ENCODE measurements at regions of chr13 and their contacts with region 1.

Region 1: GRCh38 chr13:40517486-40518480 is 148.7 kb downstream of the FOXO1 start:
- DNase-seq: no peak
- H3K4me3 Mint-ChIP-seq: peak overlapping the region; percentile 62
- H3K27ac Mint-ChIP-seq: peak overlapping the region; percentile 69
- H3K4me1 Mint-ChIP-seq: peaks cover 83% of the 10 kb centered on the region
- H3K27me3 Mint-ChIP-seq: no peaks in the 10 kb centered on the region

Region 2: GRCh38 chr13:39170711-39171110 is 1347.1 kb before region 1 on chr13:
- intact Hi-C with region 1: no loop called
- DNase-seq: no peak
- H3K4me3 Mint-ChIP-seq: no peak overlapping the region
- H3K27ac Mint-ChIP-seq: no peak overlapping the region
- H3K4me1 Mint-ChIP-seq: no peaks in the 10 kb centered on the region
- H3K27me3 Mint-ChIP-seq: no peaks in the 10 kb centered on the region

Region 3: DNA sequence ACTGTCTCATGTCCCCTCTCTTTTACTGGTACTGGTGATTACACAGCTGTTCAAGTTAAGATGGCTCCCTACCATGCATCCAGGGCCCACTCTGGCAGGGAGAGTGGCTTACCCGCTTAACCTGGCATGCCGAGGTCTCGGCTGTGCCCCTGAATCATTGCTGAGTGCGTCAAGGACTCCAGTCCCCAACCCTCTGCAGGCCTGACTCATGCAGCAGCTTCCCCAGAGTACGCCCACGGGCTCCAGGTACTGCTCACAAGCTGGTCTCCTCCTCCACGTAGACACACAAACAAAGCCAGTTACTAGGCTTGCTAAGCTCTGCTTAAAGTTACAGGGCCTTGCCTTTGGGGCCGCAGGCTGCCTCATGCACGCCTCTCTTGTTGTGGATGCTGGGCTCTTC is 414.9 kb before region 1 on chr13:
- intact Hi-C with region 1: loop called (anchors 1 kb)
- DNase-seq: peak; percentile 51
- H3K4me3 Mint-ChIP-seq: peak overlapping the region; percentile 74
- H3K27ac Mint-ChIP-seq: peak overlapping the region; percentile 97
- H3K4me1 Mint-ChIP-seq: peaks cover 64% of the 10 kb centered on the region
- H3K27me3 Mint-ChIP-seq: no peaks in the 10 kb centered on the region

Region 4: DNA sequence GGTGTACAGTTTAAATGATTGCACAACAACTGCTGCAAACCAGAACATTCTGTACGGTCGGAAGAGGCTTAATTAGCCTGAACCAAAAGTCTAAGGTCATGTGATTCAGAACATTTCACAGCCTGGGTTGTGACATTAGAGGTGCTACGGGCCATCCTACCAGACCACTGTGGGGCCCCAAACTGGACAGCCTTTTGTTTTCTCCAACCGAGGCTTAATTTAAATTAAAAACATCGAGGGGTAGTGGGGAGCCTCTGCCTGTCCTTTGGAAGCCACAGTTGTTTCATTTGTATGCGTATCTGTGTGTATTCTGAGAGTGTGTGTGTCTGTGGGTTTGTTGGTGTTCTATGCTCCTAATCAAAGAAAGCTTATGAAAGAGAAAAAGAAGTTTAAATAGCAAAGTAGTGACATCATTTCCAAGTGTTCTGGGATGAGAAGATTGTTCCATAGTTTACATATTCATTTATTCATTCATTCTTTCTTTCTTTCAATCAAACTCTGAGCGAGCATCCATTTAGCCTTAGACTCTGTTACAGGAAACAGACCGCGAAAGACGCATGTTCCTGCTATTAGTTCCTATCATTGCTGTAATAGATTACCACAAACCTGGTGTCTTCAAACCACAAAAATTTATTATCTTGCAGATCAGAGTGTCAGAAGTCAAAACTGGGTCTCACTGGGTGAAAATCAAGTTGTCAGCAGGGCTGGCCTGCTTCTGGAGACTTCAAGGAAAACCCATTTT is 296.2 kb before region 1 on chr13:
- intact Hi-C with region 1: loop called (anchors 1 kb)
- DNase-seq: no peak
- H3K4me3 Mint-ChIP-seq: peak overlapping the region; percentile 37
- H3K27ac Mint-ChIP-seq: peak overlapping the region; percentile 69
- H3K4me1 Mint-ChIP-seq: peaks cover 43% of the 10 kb centered on the region
- H3K27me3 Mint-ChIP-seq: no peaks in the 10 kb centered on the region

Region 5: DNA sequence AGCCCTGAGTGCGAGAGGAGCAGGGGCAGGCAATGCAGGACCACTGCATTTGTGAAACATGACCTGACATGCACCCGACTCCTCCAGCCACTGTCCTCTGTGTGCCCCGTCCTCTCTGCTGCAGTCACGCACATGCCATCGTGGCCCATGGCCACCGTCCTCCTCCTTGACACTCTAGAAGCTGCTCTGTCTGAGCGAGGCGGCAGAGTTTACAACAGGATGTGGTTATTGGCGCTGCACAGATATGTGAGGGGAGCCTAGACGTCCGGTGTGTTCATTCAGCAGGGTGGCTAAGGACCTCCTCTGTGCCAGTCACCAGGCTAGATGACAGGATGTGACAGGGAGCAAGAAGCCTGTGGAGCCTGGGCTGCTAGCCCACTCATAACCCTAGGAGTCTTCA is 129.2 kb before region 1 on chr13:
- intact Hi-C with region 1: loop called (anchors 1 kb)
- DNase-seq: peak; percentile 79
- H3K4me3 Mint-ChIP-seq: peak overlapping the region; percentile 76
- H3K27ac Mint-ChIP-seq: peak overlapping the region; percentile 96
- H3K4me1 Mint-ChIP-seq: peaks cover 56% of the 10 kb centered on the region
- H3K27me3 Mint-ChIP-seq: no peaks in the 10 kb centered on the region

Region 6: DNA sequence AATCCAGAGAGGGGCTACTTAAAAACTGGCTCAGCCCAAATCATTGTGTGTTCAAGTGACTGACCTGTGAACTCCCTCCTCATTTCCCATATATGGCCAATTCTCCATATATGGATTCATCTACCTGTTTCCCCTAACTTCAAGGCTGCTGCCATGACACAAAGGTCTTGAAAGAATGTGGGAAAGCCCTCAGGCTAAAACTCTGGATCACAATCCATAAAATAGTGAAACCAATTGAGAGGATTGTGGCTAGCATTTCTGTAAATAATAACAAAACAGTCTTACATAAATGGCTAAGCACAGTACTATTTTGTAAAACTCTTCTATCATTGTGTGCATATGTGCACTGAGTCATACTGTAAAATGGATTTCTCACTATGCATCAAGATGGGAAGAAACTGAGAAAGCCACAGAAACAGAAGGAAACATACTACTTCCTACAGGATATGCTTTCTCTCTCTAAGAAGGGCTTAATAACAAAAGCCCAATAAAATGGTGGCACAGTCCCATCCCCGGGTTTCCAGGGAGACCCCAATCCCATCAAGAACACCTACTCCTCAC is 68.2 kb after region 1 on chr13:
- intact Hi-C with region 1: loop called (anchors 2 kb)
- DNase-seq: no peak
- H3K4me3 Mint-ChIP-seq: no peak overlapping the region
- H3K27ac Mint-ChIP-seq: no peak overlapping the region
- H3K4me1 Mint-ChIP-seq: peaks cover 88% of the 10 kb centered on the region
- H3K27me3 Mint-ChIP-seq: no peaks in the 10 kb centered on the region

Region 7: DNA sequence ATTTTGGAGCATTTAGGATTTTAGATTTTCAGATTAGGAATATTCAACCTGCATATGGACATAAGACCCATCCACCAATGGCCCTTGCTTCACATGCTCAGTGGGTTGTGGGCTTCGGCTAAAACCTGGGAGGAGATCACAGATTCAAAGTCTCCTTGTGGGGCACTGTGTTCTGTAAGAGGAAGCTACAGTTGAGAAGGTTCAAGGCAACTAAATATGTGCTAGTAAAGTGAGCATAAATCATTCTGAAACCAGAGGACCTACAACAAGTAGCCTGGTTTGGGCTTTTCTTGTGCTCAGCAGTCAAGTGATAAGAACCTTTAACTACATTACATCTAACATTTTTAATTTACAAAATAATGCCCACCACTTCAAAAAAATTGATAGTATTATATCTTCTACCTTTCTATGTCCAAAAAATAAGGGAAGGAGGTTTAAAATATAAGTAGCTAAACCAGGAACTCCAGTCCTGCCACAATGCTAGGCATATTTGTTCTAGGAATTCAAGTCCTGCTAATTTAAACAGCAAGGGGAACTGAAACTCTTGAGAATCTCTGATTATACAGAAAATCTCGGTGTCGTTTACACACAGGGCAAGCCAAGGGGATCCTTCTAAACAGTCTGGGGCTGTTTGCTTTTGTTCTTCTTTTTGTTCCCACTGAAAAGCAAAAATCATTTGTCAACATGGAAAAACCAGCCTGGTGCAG is 112.0 kb after region 1 on chr13:
- intact Hi-C with region 1: no loop called
- DNase-seq: no peak
- H3K4me3 Mint-ChIP-seq: peak overlapping the region; percentile 11
- H3K27ac Mint-ChIP-seq: peak overlapping the region; percentile 47
- H3K4me1 Mint-ChIP-seq: peaks cover 78% of the 10 kb centered on the region
- H3K27me3 Mint-ChIP-seq: no peaks in the 10 kb centered on the region

Region 8: GRCh38 chr13:40697711-40698110 is 179.9 kb after region 1 on chr13:
- intact Hi-C with region 1: no loop called
- DNase-seq: no peak
- H3K4me3 Mint-ChIP-seq: no peak overlapping the region
- H3K27ac Mint-ChIP-seq: no peak overlapping the region
- H3K4me1 Mint-ChIP-seq: no peaks in the 10 kb centered on the region
- H3K27me3 Mint-ChIP-seq: no peaks in the 10 kb centered on the region

Region 9: DNA sequence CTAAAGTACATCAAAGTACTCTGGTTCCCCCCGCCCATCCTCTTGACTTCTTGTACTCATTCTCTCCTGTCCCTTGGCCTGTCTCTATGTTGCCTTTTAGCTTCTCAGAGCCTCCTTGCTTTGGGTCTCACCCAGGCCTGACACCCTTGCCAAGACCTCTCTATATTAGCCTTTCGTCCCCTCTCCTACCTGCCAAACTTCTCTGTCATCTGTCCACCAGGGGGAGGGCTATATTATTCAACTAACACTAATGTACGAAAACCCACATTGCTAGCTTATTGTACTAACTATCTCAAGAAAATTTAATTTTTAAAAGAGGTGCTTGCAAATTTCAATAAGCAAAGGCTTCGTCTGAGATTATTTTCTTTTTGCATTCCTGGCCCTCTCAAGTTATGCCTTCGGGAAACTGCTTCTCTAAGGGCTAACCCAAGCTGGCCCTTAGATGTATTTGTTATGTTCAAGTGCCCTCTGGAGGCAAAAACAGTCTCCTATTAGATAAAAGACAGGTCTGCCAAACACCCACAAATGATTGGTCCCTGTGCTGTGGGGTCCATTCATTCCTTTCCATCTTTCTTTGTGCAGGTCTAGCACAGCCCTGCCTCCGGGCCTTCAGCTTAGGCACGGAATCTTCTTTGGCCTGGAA is 259.5 kb after region 1 on chr13:
- intact Hi-C with region 1: loop called (anchors 5 kb)
- DNase-seq: peak; percentile 28
- H3K4me3 Mint-ChIP-seq: peak overlapping the region; percentile 76
- H3K27ac Mint-ChIP-seq: peak overlapping the region; percentile 99
- H3K4me1 Mint-ChIP-seq: peaks cover 33% of the 10 kb centered on the region
- H3K27me3 Mint-ChIP-seq: no peaks in the 10 kb centered on the region

Region 10: GRCh38 chr13:42440191-42440550 is 1922.4 kb after region 1 on chr13:
- intact Hi-C with region 1: no loop called
- DNase-seq: no peak
- H3K4me3 Mint-ChIP-seq: no peak overlapping the region
- H3K27ac Mint-ChIP-seq: no peak overlapping the region
- H3K4me1 Mint-ChIP-seq: peaks cover 5% of the 10 kb centered on the region
- H3K27me3 Mint-ChIP-seq: no peaks in the 10 kb centered on the region